Transverse colon (tissue), 4 donors: ENCODE measurements at regions of chr12 and their contacts with region 1.

Region 1: DNA sequence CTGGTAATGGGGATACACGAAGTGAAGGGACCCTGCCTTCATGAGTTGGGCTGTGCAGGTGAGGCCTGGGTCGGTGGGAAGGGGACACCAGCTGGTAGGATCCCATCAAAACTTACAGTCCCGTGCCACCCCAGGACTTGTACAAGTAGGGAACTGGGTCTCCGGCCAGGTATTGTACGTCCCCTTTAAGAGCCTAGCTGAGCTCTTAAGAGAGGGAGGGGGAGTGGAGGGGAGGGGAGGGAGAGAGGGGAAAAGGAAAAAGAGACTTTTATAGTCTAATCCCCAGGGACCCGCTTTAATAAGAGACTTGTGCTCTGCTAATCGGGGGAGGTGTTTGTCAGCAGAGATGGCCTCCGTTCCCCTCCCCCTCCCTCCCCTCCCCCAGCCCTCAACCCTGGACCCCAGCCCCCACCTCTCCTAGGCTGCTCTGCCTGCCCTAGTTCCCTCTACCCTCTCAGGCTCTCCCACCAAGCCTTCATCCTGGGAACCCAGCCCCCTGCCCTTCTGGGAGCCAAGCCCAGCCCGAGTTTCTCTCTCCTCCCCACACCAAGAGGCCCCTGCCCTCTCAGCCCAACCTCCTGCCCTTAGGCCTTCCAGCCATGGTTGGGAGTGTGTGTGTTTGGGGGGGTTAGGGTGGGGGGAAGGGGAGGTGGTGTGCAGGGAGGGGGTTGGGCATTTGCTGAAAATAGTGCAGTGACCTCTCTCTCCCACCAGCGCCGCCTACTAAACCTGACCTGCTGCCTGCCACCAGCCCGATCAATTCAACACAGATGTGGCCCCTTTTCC is 2.6 kb downstream of the GDF11 start:
- DNase-seq: no peak
- H3K4me3 ChIP-seq: peak overlapping the region in 1 of 4 donors; percentile 23
- H3K27ac ChIP-seq: peak overlapping the region; percentile 21 to 86 (median 42)
- H3K4me1 ChIP-seq: peaks cover 13 to 33% (median 22%) of the 10 kb centered on the region in 4 donors
- H3K27me3 ChIP-seq: peaks cover 21% of the 10 kb centered on the region
- CTCF ChIP-seq: no peak
- EP300 ChIP-seq: no peak
- POLR2A ChIP-seq: no peak

Region 2: DNA sequence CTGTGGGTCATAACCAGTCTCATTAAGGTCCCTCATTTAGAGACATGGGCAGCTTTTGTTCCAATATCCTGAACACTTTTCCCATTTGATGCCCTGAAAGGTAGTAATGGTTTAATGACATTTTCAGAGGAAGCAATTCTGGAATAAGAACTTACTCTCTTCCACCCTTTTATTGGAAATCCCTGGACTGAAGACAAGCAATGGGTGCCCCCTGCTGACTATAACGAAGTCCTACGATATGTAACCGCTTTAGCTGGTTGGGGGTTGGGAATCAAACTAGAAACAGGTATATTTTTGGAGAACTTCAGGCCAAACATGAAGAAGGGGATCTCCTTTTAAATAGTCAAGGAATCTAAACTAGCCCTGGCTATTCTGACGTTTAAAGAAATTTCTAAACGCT is 51.5 kb after region 1 on chr12:
- in situ Hi-C with region 1: loop called in 2 of 4 experiments (anchors 5 to 10 kb)
- intact Hi-C with region 1: loop called (anchors 10 kb)
- DNase-seq: no peak
- H3K4me3 ChIP-seq: no peak overlapping the region
- H3K27ac ChIP-seq: no peak overlapping the region
- H3K4me1 ChIP-seq: peaks cover 0 to 7% (median 0%) of the 10 kb centered on the region in 4 donors
- H3K27me3 ChIP-seq: no peaks in the 10 kb centered on the region
- CTCF ChIP-seq: peak in 4 of 5 experiments; percentile 28 to 41 (median 36)
- EP300 ChIP-seq: no peak
- POLR2A ChIP-seq: no peak